ENCODE measurements at regions of chr17 and their contacts with region 1.

Region 1: DNA sequence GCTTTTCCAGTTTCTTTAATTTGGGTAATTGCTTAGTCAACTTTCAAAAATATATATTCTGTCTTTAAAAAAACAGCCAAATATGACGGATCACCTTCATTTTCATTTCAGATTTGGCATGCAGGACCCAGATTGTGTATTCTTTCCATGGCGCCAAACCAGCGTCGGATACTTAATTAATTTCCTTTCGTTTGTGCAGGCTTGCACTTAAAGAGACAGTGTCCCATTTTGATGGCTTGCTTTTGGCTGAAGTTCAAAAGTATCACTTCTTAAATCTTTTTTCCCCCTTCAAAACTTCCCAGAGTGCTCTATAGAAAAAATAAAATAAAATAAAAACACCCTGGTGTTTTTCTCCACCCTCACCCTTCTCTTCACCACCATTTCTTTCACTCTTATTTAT is 394.5 kb upstream of the SOX9 start:
- DNase-seq: no peak
- H3K4me3 ChIP-seq: no peak overlapping the region
- H3K27ac ChIP-seq: no peak overlapping the region
- H3K4me1 ChIP-seq: no peaks in the 10 kb centered on the region
- H3K27me3 ChIP-seq: no peaks in the 10 kb centered on the region
- CTCF ChIP-seq: no peak
- EP300 ChIP-seq: no peak
- POLR2A ChIP-seq: no peak

Region 2: DNA sequence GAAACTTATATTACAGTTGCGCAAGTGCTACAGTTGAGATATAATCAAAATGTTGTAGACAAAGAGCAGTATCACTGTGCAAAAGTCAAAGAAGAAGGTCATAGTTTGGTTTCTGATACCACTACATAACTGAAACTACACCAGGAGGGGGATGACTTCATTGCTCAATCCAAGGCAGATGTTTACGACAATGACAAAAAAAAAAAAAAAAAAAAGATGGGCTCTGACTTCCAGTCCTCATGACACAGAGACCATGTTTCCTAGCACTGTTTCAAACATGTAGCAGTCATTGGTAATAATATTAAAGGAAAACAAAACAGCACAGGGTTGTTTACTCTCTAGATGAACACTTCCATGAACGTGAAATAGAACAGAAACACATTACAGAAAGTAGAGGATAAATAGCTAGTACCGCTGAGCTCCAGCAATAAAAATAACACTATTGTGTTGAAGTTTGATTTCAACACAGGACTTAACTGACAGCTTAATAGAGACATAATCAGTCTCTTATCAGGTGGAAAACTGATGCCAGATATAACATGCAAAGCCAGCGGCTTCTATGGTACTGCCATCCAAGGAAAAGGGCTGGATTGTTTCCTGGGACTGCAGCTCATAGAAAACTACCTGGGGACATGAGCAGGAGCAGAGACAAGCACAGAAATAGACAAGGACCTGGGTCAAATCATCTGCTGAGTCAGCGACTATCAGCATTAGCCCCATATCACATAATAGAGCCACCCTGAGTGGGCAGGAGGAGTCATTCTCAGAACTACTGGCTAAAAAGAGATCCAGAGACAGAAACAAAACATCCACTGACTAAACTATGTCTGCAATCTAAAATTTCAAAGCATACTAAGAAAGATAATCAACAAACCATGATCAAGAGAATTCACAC is 69.1 kb before region 1 on chr17:
- in situ Hi-C with region 1: no loop called
- intact Hi-C with region 1: no loop called
- DNase-seq: no peak
- H3K4me3 ChIP-seq: no peak overlapping the region
- H3K27ac ChIP-seq: no peak overlapping the region
- H3K4me1 ChIP-seq: no peaks in the 10 kb centered on the region
- H3K27me3 ChIP-seq: no peaks in the 10 kb centered on the region
- CTCF ChIP-seq: no peak
- EP300 ChIP-seq: no peak
- POLR2A ChIP-seq: no peak

Region 3: GRCh38 chr17:71677439-71677838 is 48.9 kb before region 1 on chr17:
- in situ Hi-C with region 1: no loop called
- intact Hi-C with region 1: no loop called
- DNase-seq: no peak
- H3K4me3 ChIP-seq: no peak overlapping the region
- H3K27ac ChIP-seq: no peak overlapping the region
- H3K4me1 ChIP-seq: peaks cover 0 to 6% (median 0%) of the 10 kb centered on the region in 4 donors
- H3K27me3 ChIP-seq: no peaks in the 10 kb centered on the region
- CTCF ChIP-seq: no peak
- EP300 ChIP-seq: no peak
- POLR2A ChIP-seq: no peak

Region 4: DNA sequence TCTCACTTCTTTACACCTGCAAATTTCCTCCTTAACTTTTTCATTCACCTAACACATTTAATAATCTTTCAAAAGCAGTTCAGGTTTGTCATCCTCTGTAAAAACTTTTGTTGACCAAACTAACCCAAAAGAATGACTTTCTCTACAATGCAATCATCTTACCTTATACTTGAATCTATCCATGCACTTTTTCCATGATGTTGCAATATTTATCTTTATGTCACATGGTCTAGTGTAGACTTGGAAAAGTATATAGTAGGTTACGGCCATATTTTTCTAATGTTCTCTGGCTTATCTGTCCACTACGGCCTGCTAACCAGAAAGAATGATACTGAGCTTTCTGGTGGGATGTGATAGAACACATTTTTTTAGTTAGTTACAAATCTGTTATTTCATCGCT is 36.6 kb before region 1 on chr17:
- in situ Hi-C with region 1: no loop called
- intact Hi-C with region 1: loop called (anchors 2 kb)
- DNase-seq: no peak
- H3K4me3 ChIP-seq: no peak overlapping the region
- H3K27ac ChIP-seq: no peak overlapping the region
- H3K4me1 ChIP-seq: no peaks in the 10 kb centered on the region
- H3K27me3 ChIP-seq: no peaks in the 10 kb centered on the region
- CTCF ChIP-seq: no peak
- EP300 ChIP-seq: no peak
- POLR2A ChIP-seq: no peak